ENCODE measurements at regions of chr2 and their contacts with region 1.

Region 1: DNA sequence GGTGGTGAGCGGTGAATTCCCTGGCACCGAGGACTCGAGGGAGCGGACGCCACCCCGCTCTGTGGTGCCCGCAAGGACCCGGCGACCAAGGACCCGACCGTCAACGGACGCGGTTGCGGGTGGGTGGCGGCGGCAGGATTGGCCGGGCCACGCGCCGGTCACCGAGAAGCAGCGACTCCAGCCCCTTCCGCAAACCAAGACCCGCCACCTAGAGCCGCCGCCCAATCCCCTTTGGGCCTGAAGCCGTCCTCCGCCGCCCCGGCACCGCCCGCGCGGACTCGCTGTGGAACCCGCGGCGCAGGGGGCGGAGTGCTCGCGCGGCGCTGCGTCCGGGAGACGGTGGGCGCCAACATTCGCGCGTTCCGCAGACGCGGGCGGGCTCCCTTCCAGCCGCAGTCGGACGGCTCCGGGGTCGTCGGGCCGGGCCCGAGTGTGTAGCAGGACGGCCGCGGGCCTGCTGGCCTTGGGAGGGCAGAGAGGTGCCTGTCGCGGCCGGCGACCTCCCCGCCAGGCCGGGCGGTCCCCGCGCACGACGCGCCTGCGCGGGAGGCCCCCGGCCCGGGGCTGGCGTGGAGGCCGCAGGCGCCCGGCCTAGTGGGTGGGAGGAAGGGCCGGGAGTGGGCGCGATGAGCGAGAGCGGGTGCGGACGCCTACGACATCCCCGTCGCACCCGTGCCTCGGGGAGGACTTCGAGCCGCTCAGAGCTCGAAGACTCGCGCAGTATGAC is at the starts of genes FAM228B and PFN4:
- DNase-seq: peak; percentile 61
- H3K4me3 Mint-ChIP-seq: peak within 1 kb of the TSS; percentile 84
- H3K27ac Mint-ChIP-seq: peak within 1 kb of the TSS; percentile 67
- H3K4me1 Mint-ChIP-seq: peaks cover 14% of the 10 kb centered on the region
- H3K27me3 Mint-ChIP-seq: peaks cover 1% of the 10 kb centered on the region
- total RNA-seq, gene FAM228B: 4.5 and 6.3 TPM in 2 replicates
- total RNA-seq, gene PFN4: 0.30 TPM in 1 of 2 replicates, not detected in the other

Region 2: DNA sequence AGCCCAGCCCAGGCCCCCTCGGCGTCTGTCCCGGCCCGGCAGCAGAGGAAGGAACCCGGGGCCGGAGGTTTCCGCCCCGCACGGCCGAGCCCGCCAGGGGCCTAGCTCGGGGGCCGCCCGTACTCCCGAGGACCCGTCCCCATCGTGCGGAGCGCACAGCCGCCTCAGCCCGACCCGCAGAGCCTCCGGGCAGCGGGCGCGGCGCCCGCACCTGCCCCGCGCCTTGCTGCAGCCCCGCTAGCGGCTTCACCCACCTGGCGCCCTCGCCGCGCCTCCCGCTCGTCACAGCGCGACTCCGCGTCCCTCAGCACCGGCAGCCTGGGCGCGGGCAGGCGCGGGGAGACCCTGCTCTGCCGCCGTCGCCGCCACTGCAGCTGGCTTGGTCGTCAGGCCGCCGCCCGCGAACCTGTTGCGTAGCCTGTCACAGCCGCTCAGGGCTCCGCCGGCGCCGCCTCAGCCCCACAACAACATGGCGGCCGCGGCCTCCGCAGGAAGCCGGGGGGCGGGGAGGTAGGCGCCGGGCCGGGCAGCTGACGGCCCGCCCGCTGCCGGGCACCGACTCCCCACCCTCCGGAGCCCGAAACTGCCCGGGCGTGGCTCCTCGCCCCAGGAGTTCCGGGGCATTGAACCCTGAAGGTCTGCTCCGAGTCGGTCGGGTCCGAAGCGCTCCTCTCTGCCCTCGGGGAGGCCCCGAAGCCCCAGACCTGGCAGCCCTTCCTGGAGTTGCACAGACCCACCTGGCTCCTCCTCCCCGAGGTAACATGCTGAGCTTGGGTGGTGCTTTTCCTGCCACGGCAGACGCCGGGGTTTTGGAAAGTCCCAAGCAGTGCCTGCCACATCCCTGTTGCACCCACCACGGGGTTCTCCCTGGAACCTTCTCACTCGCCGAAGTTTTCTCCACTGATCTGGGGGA is 236.9 kb after region 1 on chr2 and contains the start of gene ITSN2:
- intact Hi-C with region 1: loop called (anchors 5 kb)
- DNase-seq: peak; percentile 77
- H3K4me3 Mint-ChIP-seq: peak within 1 kb of the TSS; percentile 87
- H3K27ac Mint-ChIP-seq: peak within 1 kb of the TSS; percentile 93
- H3K4me1 Mint-ChIP-seq: peaks cover 25% of the 10 kb centered on the region
- H3K27me3 Mint-ChIP-seq: peaks cover 2% of the 10 kb centered on the region
- total RNA-seq, gene ITSN2: 50.0 and 53.2 TPM in 2 replicates

Region 3: DNA sequence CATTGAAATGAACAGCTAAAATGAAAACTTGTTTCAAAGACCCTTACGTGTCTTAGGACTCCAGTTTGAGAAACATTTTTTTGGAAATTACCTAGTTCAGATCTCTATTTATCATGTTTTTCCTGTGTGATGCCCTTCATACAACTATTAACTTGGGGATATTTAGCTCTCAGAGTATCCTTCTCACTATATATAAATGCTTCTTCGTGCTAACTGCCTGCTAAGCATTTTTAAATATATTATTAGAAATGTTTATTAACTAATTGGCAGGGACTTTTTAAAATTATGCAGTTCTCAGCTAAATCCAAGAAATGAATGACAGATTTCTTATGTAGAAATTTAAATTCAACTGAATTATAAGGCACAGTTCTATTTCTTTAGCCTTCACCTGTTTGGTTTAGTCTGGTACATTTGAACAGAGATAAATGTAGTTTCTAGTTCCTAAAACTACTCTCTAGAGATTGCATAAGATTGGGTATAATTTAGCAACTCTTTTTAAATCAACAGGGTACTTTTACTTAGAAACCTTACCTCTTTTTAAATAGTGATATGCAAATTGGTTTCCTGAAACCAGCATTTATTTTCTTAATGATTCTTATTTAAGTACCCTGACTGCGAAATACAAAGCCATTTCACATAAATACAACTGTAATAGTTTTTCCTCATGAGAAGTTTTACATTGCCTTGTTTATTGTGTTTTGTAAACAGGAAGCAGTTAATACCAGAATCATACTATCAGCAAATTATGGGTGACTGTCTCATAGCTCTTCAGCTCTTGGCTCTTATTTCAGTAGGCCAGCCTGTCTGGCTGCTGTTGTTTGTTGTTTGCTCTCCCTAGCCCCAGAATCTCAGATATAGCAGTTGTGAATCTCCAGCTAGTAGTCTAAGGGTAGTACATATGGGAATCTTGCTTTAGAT is 529.2 kb after region 1 on chr2:
- intact Hi-C with region 1: no loop called
- DNase-seq: no peak
- H3K4me3 Mint-ChIP-seq: no peak overlapping the region
- H3K27ac Mint-ChIP-seq: no peak overlapping the region
- H3K4me1 Mint-ChIP-seq: peaks cover 4% of the 10 kb centered on the region
- H3K27me3 Mint-ChIP-seq: no peaks in the 10 kb centered on the region

Measured in activated T-helper 2 cell treated with anti-CD3 and anti-CD28 coated beads, Interferon-gamma antibody, Interleukin-2, Interleukin-4, amounts not matched to agents 10 μg/mL and 5 μg/mL and 100 μg/mL, durations not matched to agents 14 hours and 24 hours and 36 hours (primary cell).